Activated B cell treated with CpG ODN at 0.5 μM for 24 hours (primary cell): ENCODE measurements at regions of chr12 and their contacts with region 1.

Region 1: DNA sequence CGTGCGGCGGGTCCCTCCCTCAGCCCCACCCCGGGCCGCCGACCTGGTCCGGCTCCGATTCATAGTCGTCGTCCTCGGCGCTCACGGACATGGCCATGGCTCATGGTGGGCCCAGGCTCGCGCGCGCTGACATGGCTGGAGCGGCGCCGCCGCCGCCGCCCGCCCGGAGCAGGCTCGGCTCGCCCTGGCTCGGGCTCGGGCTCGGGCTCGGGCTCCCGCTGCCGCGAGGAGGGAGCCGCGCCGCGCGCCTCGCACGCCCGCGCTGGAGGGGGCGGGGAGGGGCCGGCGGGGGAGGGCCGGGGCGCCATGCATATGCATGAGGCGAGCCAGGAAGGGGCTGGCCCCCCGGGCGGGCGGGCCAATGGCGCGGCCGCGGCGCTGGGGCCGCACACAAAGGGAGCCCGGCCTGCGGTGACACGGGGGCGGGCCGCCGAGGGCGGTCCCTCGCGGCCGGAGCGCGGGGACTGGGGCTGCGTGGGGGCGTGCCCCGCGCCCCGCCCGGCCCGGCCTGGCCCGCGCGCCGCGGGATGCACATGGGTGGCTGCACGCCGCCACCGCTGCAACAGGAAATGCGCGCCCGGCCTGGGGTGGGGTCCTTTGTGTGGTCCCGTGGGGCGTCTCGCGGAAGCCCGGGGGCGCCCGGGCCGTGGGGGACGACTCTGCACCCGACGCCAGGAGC is 67.3 kb downstream of the RNF34 start:
- DNase-seq: peak; percentile 87
- ATAC-seq: peak; percentile 86
- H3K4me3 Mint-ChIP-seq: peak overlapping the region; percentile 41
- H3K27ac Mint-ChIP-seq: no peak overlapping the region
- H3K4me1 Mint-ChIP-seq: peaks cover 58% of the 10 kb centered on the region
- H3K27me3 Mint-ChIP-seq: no peaks in the 10 kb centered on the region
- CTCF ChIP-seq: no peak

Region 2: GRCh38 chr12:121351820-121352681 is 115.2 kb before region 1 on chr12 and contains the start of gene ANAPC5:
- CTCF ChIA-PET with region 1: no interaction called
- POLR2A ChIA-PET with region 1: no interaction called
- intact Hi-C with region 1: loop called (anchors 1 kb)
- DNase-seq: peak; percentile 73
- ATAC-seq: peak; percentile 99
- H3K4me3 Mint-ChIP-seq: peak within 1 kb of the TSS; percentile 94
- H3K27ac Mint-ChIP-seq: peak within 1 kb of the TSS; percentile 91
- H3K4me1 Mint-ChIP-seq: peaks cover 28% of the 10 kb centered on the region
- H3K27me3 Mint-ChIP-seq: no peaks in the 10 kb centered on the region
- CTCF ChIP-seq: no peak
- total RNA-seq, gene ANAPC5: 116 and 143 TPM in 2 replicates

Region 3: DNA sequence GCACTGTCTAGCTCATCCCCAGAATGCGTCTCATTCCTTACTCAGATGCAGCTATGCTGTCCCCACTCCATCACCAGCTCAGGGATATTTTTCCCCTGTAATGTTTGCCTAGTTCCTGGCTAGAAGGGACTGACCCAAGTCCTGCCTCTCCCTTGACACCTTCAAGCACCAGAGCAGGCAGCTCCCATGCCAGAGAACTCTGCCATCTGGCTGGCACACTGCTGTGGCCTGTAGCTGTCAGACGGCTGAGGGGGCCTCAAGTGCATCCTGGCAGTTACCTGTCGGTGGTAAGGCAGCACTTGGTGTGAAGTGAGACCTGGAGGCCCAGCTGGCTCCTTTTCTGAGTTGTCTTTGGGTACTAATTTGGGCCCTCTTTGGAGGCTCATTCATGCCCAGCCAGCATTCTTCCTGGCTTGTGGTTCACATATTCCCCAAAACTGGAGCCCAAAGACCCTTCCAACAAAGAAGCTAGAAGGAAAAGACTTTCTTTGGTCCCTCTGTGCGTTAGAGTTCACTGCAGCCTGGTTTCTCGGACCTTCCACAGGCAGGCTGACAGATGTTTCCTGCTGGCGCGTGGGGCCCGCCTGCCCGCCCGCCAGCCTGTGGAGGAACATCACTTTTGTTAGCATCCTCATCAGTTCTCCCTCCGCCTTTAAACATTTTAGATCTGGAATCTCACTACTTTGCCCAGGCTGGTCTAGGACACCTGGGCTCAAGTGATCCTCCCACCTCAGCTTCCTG is 34.3 kb before region 1 on chr12:
- CTCF ChIA-PET with region 1: no interaction called
- POLR2A ChIA-PET with region 1: no interaction called
- intact Hi-C with region 1: no loop called
- DNase-seq: no peak
- ATAC-seq: no peak
- H3K4me3 Mint-ChIP-seq: no peak overlapping the region
- H3K27ac Mint-ChIP-seq: peak overlapping the region; percentile 42
- H3K4me1 Mint-ChIP-seq: no peaks in the 10 kb centered on the region
- H3K27me3 Mint-ChIP-seq: no peaks in the 10 kb centered on the region
- CTCF ChIP-seq: no peak

Region 4: GRCh38 chr12:121513464-121514183 is 46.4 kb after region 1 on chr12:
- CTCF ChIA-PET with region 1: no interaction called
- POLR2A ChIA-PET with region 1: no interaction called
- intact Hi-C with region 1: loop called (anchors 5 kb)
- DNase-seq: no peak
- ATAC-seq: peak; percentile 57
- H3K4me3 Mint-ChIP-seq: peak overlapping the region; percentile 35
- H3K27ac Mint-ChIP-seq: peak overlapping the region; percentile 86
- H3K4me1 Mint-ChIP-seq: peaks cover 23% of the 10 kb centered on the region
- H3K27me3 Mint-ChIP-seq: no peaks in the 10 kb centered on the region
- CTCF ChIP-seq: no peak